Sigmoid colon (tissue), 7 donors: ENCODE measurements at regions of chr7 and their contacts with region 1.

Region 1: DNA sequence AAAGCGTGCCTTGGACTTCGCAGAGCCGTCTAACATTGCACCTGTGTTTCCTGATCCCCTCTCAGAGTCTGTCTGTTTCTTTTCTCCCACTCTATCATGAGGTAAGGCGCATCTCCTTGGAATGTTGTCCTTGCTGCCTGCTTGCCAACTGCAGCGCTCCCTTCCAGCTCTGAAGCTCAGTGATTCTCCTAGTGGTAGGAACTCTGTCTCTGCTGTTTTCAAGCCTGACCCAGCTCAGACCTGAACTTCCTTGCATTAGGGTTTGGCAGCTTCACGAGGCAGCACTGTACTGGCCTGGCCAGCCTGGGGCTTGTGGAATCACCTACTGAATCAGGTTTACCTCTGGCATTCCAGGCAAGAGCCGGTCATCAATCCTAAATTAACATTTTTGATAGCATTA is 123.9 kb downstream of the CREB5 start:
- DNase-seq: peak; percentile 75
- H3K4me3 ChIP-seq: no peak overlapping the region
- H3K27ac ChIP-seq: no peak overlapping the region
- H3K4me1 ChIP-seq: peaks cover 0 to 6% (median 2%) of the 10 kb centered on the region in 4 donors
- H3K27me3 ChIP-seq: no peaks in the 10 kb centered on the region
- CTCF ChIP-seq: peak; percentile 36 to 79 (median 50)
- EP300 ChIP-seq: no peak
- POLR2A ChIP-seq: no peak

Region 2: DNA sequence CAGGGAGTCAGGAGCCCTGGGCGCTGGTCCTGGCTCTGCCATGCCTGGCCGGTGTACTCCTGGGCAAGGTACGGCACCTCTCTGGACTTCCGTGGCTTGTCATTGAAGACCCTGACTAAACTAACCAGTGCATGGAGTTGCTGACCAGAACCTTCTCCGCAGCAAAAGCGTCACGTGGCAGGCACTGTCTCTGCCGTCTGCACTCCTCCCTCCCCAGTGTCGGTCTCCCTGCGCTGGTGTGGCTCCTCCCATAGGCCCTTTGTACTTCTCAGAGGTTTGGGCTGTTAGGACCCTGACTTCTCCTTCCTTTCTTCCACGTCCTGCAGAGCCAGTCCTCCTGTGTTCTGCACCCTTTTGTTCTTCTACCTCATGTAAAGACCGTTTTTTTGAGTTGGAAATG is 224.6 kb before region 1 on chr7:
- intact Hi-C with region 1: no loop called
- DNase-seq: no peak
- H3K4me3 ChIP-seq: no peak overlapping the region
- H3K27ac ChIP-seq: no peak overlapping the region
- H3K4me1 ChIP-seq: peaks cover 0 to 9% (median 3%) of the 10 kb centered on the region in 4 donors
- H3K27me3 ChIP-seq: no peaks in the 10 kb centered on the region
- CTCF ChIP-seq: no peak
- EP300 ChIP-seq: no peak
- POLR2A ChIP-seq: no peak

Region 3: GRCh38 chr7:28389504-28390395 is 146.5 kb before region 1 on chr7:
- intact Hi-C with region 1: loop called (anchors 5 kb)
- DNase-seq: no peak
- H3K4me3 ChIP-seq: peak overlapping the region; percentile 20 to 45 (median 38)
- H3K27ac ChIP-seq: peak overlapping the region in 1 of 4 donors; percentile 57
- H3K4me1 ChIP-seq: peaks cover 0 to 13% (median 11%) of the 10 kb centered on the region in 4 donors
- H3K27me3 ChIP-seq: no peaks in the 10 kb centered on the region
- CTCF ChIP-seq: peak; percentile 57 to 78 (median 66)
- EP300 ChIP-seq: no peak
- POLR2A ChIP-seq: no peak

Region 4: GRCh38 chr7:28419717-28420116 is 116.5 kb before region 1 on chr7:
- intact Hi-C with region 1: loop called (anchors 5 kb)
- DNase-seq: peak; percentile 77
- H3K4me3 ChIP-seq: no peak overlapping the region
- H3K27ac ChIP-seq: peak overlapping the region in 1 of 4 donors; percentile 18
- H3K4me1 ChIP-seq: peaks cover 0 to 24% (median 18%) of the 10 kb centered on the region in 4 donors
- H3K27me3 ChIP-seq: no peaks in the 10 kb centered on the region
- CTCF ChIP-seq: no peak
- EP300 ChIP-seq: no peak
- POLR2A ChIP-seq: no peak